Transverse colon (tissue), 4 donors: ENCODE measurements at regions of chr19 and their contacts with region 1.

Region 1: DNA sequence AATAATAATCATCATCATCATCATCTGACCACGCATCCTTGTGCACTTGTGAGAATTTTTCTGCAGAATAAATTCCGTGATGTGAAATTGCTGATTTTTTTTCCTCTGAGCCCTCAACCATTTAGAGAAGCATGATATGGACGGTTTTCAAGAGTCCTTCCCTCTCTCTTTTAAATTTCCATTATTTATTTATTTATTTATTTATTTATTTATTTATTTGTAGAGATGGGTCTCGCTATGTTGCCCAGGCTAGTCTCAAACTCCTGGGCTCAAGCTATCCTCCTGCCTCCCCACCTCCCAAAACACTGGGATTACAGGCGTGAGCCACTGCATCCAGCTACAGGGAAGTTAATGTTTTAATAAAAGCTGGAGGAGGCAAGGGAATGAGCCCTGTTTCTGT is 39.6 kb downstream of the CACNA1A start:
- DNase-seq: no peak
- H3K4me3 ChIP-seq: no peak overlapping the region
- H3K27ac ChIP-seq: no peak overlapping the region
- H3K4me1 ChIP-seq: no peaks in the 10 kb centered on the region
- H3K27me3 ChIP-seq: no peaks in the 10 kb centered on the region
- CTCF ChIP-seq: no peak
- EP300 ChIP-seq: no peak
- POLR2A ChIP-seq: no peak

Region 2: DNA sequence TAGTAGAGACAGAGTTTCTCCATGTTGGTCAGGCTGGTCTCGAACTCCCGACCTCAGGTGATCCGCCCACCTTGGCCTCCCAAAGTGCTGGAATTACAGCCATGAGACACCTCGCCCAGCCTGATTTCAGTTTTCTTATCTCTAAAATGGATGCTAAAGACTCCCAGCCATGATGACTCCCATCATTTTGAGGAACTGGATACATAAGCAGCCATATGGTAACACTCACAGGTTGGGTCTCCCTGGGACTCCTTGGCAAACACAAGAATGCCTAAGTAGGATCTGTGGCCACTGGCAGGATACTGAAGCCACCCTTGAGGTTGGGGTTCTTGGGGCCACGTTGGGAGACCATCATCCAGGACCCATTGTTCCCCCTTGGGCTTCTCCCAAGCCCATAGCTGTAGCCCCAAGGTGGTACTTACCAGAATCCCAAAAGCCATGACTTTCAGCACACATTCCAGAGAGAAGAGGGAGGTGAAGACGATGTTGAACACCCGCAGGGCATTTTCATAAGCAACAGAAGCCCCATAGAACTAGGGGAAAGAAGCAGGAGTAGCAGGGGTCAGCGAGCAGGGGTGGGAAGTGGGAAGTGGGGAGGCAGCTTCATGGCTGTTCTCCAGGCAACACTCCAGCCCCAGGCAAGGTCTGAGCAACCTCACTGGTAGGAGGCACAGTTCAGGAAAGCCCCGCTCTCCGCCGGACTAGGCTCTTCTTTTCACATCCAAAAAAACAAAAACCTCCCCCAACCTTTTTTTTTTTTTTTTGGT is 213.9 kb before region 1 on chr19:
- in situ Hi-C with region 1: no loop called
- intact Hi-C with region 1: no loop called
- DNase-seq: no peak
- H3K4me3 ChIP-seq: no peak overlapping the region
- H3K27ac ChIP-seq: no peak overlapping the region
- H3K4me1 ChIP-seq: no peaks in the 10 kb centered on the region
- H3K27me3 ChIP-seq: peaks cover 14% of the 10 kb centered on the region
- CTCF ChIP-seq: no peak
- EP300 ChIP-seq: no peak
- POLR2A ChIP-seq: no peak

Region 3: DNA sequence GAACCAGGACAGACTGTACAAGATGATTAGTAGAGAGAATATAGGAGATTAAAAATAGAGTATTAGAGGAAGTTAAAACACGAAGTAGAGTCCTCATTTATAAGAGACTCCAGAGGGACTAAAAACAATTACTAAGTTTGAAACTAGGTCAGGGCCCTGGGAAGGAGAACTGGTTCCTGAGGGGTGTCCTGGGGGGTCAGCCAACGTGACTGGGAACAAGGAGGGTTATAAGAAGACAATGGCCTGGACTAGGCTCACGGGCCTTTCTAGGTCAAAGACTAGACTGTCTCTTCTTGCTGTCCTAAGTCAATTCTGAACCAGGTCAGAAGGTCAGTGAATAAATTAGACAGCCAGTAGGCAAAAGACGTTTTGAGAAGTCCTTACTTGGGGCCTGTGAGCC is 151.2 kb before region 1 on chr19:
- in situ Hi-C with region 1: no loop called
- intact Hi-C with region 1: no loop called
- DNase-seq: peak; percentile 8
- H3K4me3 ChIP-seq: no peak overlapping the region
- H3K27ac ChIP-seq: no peak overlapping the region
- H3K4me1 ChIP-seq: no peaks in the 10 kb centered on the region
- H3K27me3 ChIP-seq: no peaks in the 10 kb centered on the region
- CTCF ChIP-seq: no peak
- EP300 ChIP-seq: no peak
- POLR2A ChIP-seq: no peak

Region 4: DNA sequence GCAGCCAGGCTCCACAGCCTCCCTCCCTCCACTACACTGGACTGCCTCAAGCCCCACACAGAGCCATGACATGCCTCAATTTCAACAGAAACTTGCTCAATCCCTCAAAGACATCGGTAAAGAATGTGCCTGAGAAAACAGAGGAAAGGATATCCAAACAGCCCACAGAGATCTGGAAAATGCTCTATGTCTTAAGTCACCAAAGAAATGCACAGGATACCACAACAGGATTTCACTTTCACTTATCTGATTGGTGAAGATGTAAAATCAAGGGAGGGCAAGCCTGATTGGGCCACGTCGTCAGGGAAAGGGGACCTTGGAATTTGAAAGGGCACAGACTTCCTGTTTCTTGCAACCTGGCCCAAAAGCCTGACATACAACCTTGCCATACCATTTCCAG is 25.4 kb after region 1 on chr19:
- in situ Hi-C with region 1: no loop called
- intact Hi-C with region 1: loop called (anchors 1 kb)
- DNase-seq: no peak
- H3K4me3 ChIP-seq: no peak overlapping the region
- H3K27ac ChIP-seq: no peak overlapping the region
- H3K4me1 ChIP-seq: no peaks in the 10 kb centered on the region
- H3K27me3 ChIP-seq: peaks cover 9% of the 10 kb centered on the region
- CTCF ChIP-seq: no peak
- EP300 ChIP-seq: no peak
- POLR2A ChIP-seq: no peak